Cardiac septum (tissue), 1 donor: ENCODE measurements at regions of chr12 and their contacts with region 1.

Region 1: GRCh38 chr12:124767066-124767821 is 96.4 kb downstream of the SCARB1 start:
- DNase-seq: peak; percentile 92

Region 2: DNA sequence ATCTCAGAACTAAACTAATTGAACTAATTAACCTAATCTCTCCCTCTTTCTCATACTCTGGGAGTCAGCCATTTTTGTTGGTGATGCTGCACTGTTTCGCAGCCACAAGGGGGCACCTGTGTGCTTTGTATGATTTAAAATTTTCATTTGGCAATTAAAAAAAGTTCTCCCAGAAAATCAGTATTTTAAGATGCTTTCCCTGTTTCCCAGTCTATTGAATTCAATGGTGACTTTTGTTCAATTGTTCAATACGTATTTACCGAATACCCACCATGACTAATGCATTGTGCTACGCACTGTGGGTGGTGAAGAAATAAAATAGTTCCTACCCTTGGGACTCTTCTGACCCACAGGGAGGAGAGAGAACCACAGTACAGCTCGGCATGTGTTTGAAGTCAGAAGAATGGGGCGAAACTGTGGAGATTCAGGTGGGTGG is 730.6 kb before region 1 on chr12:
- intact Hi-C with region 1: loop called (anchors 1 kb)
- DNase-seq: no peak

Region 3: DNA sequence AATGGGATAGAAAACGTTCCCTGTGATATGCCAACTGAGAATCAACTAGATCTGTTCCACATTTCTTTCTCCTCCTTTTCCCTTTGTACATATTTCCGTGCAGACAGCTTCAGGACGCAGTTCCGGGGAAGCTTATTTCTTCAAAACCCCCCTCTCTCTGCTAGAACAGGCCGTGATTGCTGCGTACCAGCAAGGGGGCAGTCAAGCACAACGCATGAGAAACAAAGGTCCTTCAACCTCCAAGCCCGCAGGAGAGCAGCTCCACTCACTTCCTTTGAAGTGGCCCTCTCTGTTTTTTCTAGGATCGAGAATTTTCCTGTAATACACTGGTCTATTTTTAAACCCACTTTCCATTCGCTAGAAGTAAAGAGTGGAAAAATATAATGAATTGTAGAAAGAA is 713.4 kb before region 1 on chr12:
- intact Hi-C with region 1: loop called (anchors 5 kb)
- DNase-seq: no peak

Region 4: GRCh38 chr12:124321040-124321481 is 446.2 kb before region 1 on chr12:
- intact Hi-C with region 1: loop called (anchors 5 kb)
- DNase-seq: peak; percentile 85

Region 5: GRCh38 chr12:124379938-124380754 is 387.1 kb before region 1 on chr12:
- intact Hi-C with region 1: loop called (anchors 5 kb)
- DNase-seq: no peak